CD4-positive, alpha-beta T cell (primary cell): ENCODE measurements at regions of chr13 and their contacts with region 1.

Region 1: DNA sequence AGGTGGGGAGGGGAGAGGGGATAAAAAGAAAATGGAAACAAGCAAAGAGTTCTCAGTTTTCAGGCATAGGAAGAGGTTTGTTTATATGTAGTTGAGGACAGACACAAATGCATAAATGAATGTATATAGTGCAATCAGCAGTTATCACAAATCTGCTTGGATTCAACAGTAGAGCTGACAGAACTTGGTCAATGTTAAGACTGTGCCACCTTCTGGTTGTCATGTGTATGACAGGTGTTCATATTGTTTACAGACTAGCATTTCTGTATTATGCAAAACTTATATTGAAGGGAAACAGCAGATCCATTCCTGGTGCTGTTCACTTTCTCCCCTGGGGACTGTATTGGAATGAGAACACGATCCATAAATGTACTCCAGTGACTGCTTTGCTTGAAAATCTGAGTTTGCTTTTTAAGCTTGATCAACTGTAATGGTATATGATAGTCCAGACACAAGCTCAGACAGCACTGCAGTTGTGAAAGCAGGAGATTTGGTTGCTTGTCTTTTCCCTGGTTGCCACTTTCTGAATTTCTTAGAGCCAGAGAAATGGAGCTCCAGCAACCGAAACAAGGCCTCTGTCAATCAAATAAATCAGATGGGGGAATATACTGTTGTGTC is 319.5 kb upstream of the OBI1 start:
- DNase-seq: peak in 9 of 14 experiments; percentile 5 to 64 (median 14)
- ATAC-seq: peak; percentile 55
- H3K4me3 ChIP-seq: no peak overlapping the region
- H3K4me3 Mint-ChIP-seq: no peak overlapping the region
- H3K27ac ChIP-seq: no peak overlapping the region
- H3K27ac Mint-ChIP-seq: no peak overlapping the region
- H3K4me1 ChIP-seq: no peaks in the 10 kb centered on the region
- H3K4me1 Mint-ChIP-seq: no peaks in the 10 kb centered on the region
- H3K27me3 ChIP-seq: peaks cover 0 to 6% of the 10 kb centered on the region in 2 experiments
- H3K27me3 Mint-ChIP-seq: peaks cover 32% of the 10 kb centered on the region
- CTCF ChIP-seq: peak; percentile 78

Region 2: GRCh38 chr13:77584106-77584505 is 1394.4 kb before region 1 on chr13:
- CTCF ChIA-PET with region 1: no interaction called
- POLR2A ChIA-PET with region 1: no interaction called
- intact Hi-C with region 1: loop called in 1 of 2 experiments (anchors 10 kb)
- DNase-seq: no peak
- ATAC-seq: no peak
- H3K4me3 ChIP-seq: no peak overlapping the region
- H3K4me3 Mint-ChIP-seq: no peak overlapping the region
- H3K27ac ChIP-seq: no peak overlapping the region
- H3K27ac Mint-ChIP-seq: no peak overlapping the region
- H3K4me1 ChIP-seq: no peaks in the 10 kb centered on the region
- H3K4me1 Mint-ChIP-seq: no peaks in the 10 kb centered on the region
- H3K27me3 ChIP-seq: peaks cover 0 to 3% of the 10 kb centered on the region in 2 experiments
- H3K27me3 Mint-ChIP-seq: peaks cover 11% of the 10 kb centered on the region
- CTCF ChIP-seq: no peak

Region 3: GRCh38 chr13:78137404-78138142 is 840.9 kb before region 1 on chr13:
- CTCF ChIA-PET with region 1: interaction called, 15 read pairs
- POLR2A ChIA-PET with region 1: interaction called, 6 read pairs
- intact Hi-C with region 1: loop called (anchors 1 kb)
- DNase-seq: peak in 4 of 14 experiments; percentile 10 to 55 (median 43)
- ATAC-seq: peak; percentile 65
- H3K4me3 ChIP-seq: no peak overlapping the region
- H3K4me3 Mint-ChIP-seq: no peak overlapping the region
- H3K27ac ChIP-seq: no peak overlapping the region
- H3K27ac Mint-ChIP-seq: no peak overlapping the region
- H3K4me1 ChIP-seq: peaks cover 7% of the 10 kb centered on the region
- H3K4me1 Mint-ChIP-seq: peaks cover 6% of the 10 kb centered on the region
- H3K27me3 ChIP-seq: no peaks in the 10 kb centered on the region
- H3K27me3 Mint-ChIP-seq: peaks cover 4% of the 10 kb centered on the region
- CTCF ChIP-seq: peak; percentile 79

Region 4: DNA sequence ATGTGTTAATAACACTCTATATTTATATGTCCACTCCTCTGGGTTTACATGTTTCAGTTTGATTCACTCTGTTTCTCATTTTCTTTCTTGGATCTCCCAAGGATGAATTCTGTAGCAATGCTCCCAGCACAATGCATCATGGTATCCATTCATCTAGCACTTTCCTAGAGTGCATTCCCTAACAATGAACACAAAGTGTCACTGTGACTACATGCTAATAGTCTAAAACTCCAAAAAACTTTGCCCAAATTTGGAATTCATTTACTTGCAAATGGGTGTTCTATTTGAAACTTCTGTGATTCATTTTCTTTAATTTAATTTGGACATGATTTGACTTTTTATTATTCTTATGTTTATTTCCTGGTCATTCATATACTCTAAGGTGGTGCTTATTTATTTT is 661.5 kb before region 1 on chr13:
- CTCF ChIA-PET with region 1: no interaction called
- POLR2A ChIA-PET with region 1: no interaction called
- intact Hi-C with region 1: loop called in 1 of 2 experiments (anchors 10 kb)
- DNase-seq: no peak
- ATAC-seq: no peak
- H3K4me3 ChIP-seq: no peak overlapping the region
- H3K4me3 Mint-ChIP-seq: no peak overlapping the region
- H3K27ac ChIP-seq: no peak overlapping the region
- H3K27ac Mint-ChIP-seq: no peak overlapping the region
- H3K4me1 ChIP-seq: no peaks in the 10 kb centered on the region
- H3K4me1 Mint-ChIP-seq: no peaks in the 10 kb centered on the region
- H3K27me3 ChIP-seq: no peaks in the 10 kb centered on the region
- H3K27me3 Mint-ChIP-seq: peaks cover 12% of the 10 kb centered on the region
- CTCF ChIP-seq: no peak

Region 5: DNA sequence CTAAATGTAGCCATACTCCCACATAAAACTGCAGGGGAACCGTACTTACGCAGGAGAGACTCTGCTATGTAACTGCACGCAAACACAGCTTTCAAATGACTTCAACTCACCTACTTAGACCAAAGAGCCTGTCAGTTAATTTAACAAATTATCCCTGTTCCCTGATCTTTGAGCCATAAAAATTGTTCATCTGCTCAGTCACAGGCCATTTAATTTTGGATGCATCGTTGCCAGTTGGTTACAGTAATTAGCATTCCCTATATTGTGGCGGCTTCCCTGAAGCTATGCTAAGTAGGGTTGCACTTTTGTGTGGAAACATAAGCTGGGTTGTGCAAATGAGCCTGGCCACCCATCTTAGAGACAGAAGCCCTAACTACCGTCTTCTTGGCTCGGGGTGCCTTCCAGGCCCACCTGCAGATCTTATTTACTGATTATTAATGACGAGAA is 298.4 kb before region 1 on chr13:
- CTCF ChIA-PET with region 1: no interaction called
- POLR2A ChIA-PET with region 1: no interaction called
- intact Hi-C with region 1: no loop called
- DNase-seq: no peak
- ATAC-seq: no peak
- H3K4me3 ChIP-seq: no peak overlapping the region
- H3K4me3 Mint-ChIP-seq: no peak overlapping the region
- H3K27ac ChIP-seq: no peak overlapping the region
- H3K27ac Mint-ChIP-seq: no peak overlapping the region
- H3K4me1 ChIP-seq: no peaks in the 10 kb centered on the region
- H3K4me1 Mint-ChIP-seq: no peaks in the 10 kb centered on the region
- H3K27me3 ChIP-seq: peaks cover 0 to 15% of the 10 kb centered on the region in 2 experiments
- H3K27me3 Mint-ChIP-seq: peaks cover 21% of the 10 kb centered on the region
- CTCF ChIP-seq: no peak

Region 6: DNA sequence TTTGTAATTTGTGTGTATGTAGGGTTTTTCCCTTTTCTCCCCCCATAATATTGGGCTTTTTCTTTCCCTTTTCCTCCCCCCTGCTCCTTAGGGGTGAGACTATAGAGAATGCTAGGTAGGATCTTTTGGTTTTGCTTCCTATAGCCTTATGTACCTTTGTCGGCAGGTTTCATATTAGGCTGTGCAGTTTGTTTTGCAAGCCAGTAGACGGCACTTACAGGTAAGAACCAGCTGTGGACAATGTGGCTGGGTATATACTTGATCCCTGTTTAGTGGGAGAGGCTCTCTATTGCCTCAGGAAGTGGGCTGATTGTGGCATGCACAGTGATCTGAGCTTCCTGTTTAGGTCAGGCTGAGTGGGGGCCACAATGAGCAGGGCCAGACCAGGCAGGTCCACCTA is 39.7 kb after region 1 on chr13:
- CTCF ChIA-PET with region 1: no interaction called
- POLR2A ChIA-PET with region 1: no interaction called
- intact Hi-C with region 1: no loop called
- DNase-seq: no peak
- ATAC-seq: no peak
- H3K4me3 ChIP-seq: no peak overlapping the region
- H3K4me3 Mint-ChIP-seq: no peak overlapping the region
- H3K27ac ChIP-seq: no peak overlapping the region
- H3K27ac Mint-ChIP-seq: no peak overlapping the region
- H3K4me1 ChIP-seq: no peaks in the 10 kb centered on the region
- H3K4me1 Mint-ChIP-seq: no peaks in the 10 kb centered on the region
- H3K27me3 ChIP-seq: peaks cover 0 to 6% of the 10 kb centered on the region in 2 experiments
- H3K27me3 Mint-ChIP-seq: peaks cover 20% of the 10 kb centered on the region
- CTCF ChIP-seq: no peak

Region 7: DNA sequence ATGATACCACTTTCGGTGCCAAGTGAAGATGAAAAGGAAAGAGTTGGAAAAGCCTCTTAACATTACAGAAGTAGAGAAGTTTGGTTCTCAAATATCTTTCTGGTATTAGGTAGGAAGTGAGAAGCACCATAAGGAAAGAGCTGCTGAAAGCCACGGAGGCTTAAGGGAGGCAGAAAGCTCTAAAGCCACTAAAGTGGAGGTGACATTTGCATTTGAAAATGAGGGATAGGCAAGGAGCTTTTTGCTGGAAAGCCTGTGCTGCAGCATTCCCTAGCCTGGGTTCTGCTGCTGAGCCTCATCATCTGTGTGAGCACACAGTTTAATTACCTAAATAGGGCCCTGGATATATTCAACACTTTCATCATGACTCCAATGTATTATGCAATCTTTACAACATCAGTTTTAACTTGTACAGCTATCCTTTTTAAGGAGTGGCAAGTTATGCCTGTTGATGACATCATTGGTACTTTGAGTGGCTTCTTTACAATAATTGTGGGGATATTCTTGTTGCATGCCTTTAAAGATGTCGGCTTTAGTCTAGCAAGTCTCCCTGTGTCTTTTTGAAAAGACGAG is 112.1 kb after region 1 on chr13:
- CTCF ChIA-PET with region 1: no interaction called
- POLR2A ChIA-PET with region 1: no interaction called
- intact Hi-C with region 1: no loop called
- DNase-seq: no peak
- ATAC-seq: no peak
- H3K4me3 ChIP-seq: no peak overlapping the region
- H3K4me3 Mint-ChIP-seq: no peak overlapping the region
- H3K27ac ChIP-seq: no peak overlapping the region
- H3K27ac Mint-ChIP-seq: no peak overlapping the region
- H3K4me1 ChIP-seq: no peaks in the 10 kb centered on the region
- H3K4me1 Mint-ChIP-seq: no peaks in the 10 kb centered on the region
- H3K27me3 ChIP-seq: peaks cover 0 to 4% of the 10 kb centered on the region in 2 experiments
- H3K27me3 Mint-ChIP-seq: peaks cover 20% of the 10 kb centered on the region
- CTCF ChIP-seq: no peak

Region 8: GRCh38 chr13:79541426-79542049 is 563.0 kb after region 1 on chr13:
- CTCF ChIA-PET with region 1: no interaction called
- POLR2A ChIA-PET with region 1: no interaction called
- intact Hi-C with region 1: loop called in 1 of 2 experiments (anchors 5 kb)
- DNase-seq: peak in 3 of 14 experiments; percentile 73 to 82 (median 80)
- ATAC-seq: peak; percentile 63
- H3K4me3 ChIP-seq: no peak overlapping the region
- H3K4me3 Mint-ChIP-seq: no peak overlapping the region
- H3K27ac ChIP-seq: no peak overlapping the region
- H3K27ac Mint-ChIP-seq: no peak overlapping the region
- H3K4me1 ChIP-seq: no peaks in the 10 kb centered on the region
- H3K4me1 Mint-ChIP-seq: no peaks in the 10 kb centered on the region
- H3K27me3 ChIP-seq: no peaks in the 10 kb centered on the region
- H3K27me3 Mint-ChIP-seq: no peaks in the 10 kb centered on the region
- CTCF ChIP-seq: peak; percentile 97